GM23248 (cell line): ENCODE measurements at regions of chr10 and their contacts with region 1.

Region 1: DNA sequence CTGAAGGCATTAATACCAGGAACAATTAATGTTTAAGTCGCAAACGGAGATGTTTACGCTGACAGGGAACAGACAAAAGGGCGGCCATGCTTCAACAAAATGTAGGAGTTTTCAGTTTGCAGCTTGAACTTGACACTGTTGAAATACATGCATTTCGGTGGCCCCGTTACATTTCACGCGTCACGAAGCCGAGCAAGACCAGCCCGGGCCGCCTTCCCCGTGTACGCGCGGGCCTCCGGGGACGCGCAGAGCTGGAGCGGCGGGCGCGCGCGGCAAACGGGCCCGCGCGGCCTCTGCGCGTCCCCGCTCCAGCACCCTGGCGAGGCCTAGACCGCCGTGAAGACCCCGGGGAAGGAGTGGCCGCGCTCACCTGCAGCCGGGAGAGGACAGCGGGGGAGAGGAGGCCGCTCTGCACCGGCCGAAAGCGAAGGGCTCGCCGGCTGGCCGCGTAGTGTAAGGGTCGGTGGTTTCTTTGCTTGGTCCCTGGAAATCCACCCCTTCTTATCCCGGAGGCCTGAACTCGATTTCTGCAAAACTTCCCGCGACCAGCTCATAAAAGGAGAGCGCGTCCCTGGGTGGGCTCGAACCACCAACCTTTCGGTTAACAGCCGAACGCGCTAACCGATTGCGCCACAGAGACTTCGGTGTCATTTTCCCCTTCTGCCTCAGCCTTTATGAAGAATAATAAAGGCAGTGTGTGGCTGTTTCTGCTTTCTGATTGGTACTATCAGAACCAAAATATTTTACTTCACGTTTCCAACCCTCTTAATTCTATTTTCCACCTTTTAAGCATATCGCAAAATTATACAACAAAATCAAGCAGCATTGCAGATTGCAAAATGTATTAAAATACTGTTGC is 11.4 kb upstream of the EBLN1 start:
- DNase-seq: peak; percentile 94
- H3K4me3 ChIP-seq: peak overlapping the region; percentile 85
- H3K27ac ChIP-seq: peak overlapping the region; percentile 86
- H3K4me1 ChIP-seq: no peaks in the 10 kb centered on the region
- H3K27me3 ChIP-seq: no peaks in the 10 kb centered on the region

Region 2: DNA sequence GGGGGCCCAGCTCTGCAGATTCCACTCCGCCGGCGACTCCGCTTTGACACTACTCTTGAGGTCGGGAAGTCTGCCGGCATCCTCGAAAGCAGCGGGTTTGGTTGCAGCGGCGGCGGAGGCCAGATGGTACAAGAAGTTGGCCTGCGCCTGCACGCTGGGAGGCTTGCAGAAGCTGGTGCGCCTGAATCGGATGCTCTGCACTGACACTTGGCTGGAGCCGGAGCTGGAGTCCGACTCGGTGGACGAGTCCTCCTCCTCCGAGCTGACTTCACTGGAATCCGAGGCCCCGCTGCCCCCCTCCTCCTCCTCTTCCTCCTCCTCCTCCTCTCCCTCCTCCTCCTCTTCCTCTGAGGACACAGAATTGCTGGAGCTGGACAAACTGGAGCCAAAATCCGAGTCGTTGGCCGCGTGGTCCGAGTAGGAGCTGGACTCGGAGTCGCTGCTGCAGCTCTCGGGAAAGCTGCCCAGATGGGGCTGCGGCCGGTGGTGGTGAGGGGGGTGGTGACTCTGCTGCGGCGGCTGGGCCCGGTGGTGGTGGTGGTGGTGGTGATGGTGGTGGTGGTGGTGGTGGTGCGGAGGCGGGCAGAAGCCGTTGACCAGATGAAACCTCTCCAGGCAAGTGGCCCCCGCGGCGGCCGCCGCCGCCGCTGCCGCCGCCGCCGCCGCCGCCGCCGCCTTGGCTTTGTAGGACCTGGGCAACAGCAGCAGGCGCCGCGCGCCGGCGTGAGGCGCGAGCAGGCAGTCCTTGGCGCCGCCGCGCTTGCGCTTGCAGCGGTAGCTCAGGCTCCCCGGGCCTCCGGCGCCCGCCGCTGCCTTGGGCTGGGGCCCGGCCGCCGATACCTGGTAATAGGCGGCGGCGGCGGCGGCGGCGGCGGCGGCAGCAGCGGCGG is 712.7 kb before region 1 on chr10:
- in situ Hi-C with region 1: loop called (anchors 25 kb)
- DNase-seq: peak; percentile 85
- H3K4me3 ChIP-seq: peak overlapping the region; percentile 82
- H3K27ac ChIP-seq: peak overlapping the region; percentile 29; the same call in 1 of the 2 replicates
- H3K4me1 ChIP-seq: peaks cover 23% of the 10 kb centered on the region
- H3K27me3 ChIP-seq: no peaks in the 10 kb centered on the region

Region 3: GRCh38 chr10:22325272-22326144 is 96.3 kb after region 1 on chr10:
- in situ Hi-C with region 1: no loop called
- DNase-seq: peak; percentile 89
- H3K4me3 ChIP-seq: peak overlapping the region; percentile 80
- H3K27ac ChIP-seq: peak overlapping the region; percentile 65
- H3K4me1 ChIP-seq: peaks cover 35% of the 10 kb centered on the region
- H3K27me3 ChIP-seq: 0 out of 2 replicates have a peak, but pooled peaks cover 5% of the 10 kb centered on the region

Region 4: DNA sequence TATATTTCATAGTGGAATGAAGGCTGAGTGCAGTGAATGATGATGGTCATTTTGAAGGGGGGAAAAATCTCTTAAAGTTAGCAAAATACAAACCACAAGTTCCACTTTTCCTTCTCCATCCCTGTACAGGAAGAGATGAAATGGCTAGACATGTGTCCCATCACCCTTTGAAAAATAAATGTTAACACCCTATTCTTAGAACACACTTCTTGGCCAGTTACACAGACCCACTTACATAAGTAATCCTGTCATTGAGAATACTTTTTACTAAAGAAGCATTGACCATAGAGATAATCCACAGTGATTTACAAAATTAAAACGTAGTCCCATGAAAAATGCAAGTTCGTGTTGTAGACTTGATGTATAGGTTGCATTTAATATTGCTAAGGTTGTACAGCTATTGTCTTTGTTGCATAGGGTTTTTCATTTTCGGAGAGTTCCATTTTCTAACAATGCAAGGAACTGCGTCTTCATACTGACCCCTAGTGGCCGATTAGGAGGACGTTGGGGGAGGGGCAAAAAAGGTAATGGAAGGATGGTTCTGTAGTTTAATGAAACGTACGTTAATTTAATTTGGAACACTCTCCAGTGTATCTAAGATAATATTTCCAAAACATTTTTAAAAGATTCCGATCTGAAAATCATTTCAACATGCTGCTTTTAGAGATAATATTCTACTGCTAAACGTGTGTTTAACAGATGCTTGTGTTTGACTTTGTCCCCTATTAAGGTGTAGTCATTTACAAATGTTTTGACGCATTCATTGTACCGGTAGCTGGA is 759.6 kb after region 1 on chr10:
- in situ Hi-C with region 1: loop called (anchors 25 kb)
- DNase-seq: peak; percentile 78
- H3K4me3 ChIP-seq: no peak overlapping the region
- H3K27ac ChIP-seq: no peak overlapping the region
- H3K4me1 ChIP-seq: no peaks in the 10 kb centered on the region
- H3K27me3 ChIP-seq: no peaks in the 10 kb centered on the region